ENCODE measurements at regions of chr11 and their contacts with region 1.

Region 1: DNA sequence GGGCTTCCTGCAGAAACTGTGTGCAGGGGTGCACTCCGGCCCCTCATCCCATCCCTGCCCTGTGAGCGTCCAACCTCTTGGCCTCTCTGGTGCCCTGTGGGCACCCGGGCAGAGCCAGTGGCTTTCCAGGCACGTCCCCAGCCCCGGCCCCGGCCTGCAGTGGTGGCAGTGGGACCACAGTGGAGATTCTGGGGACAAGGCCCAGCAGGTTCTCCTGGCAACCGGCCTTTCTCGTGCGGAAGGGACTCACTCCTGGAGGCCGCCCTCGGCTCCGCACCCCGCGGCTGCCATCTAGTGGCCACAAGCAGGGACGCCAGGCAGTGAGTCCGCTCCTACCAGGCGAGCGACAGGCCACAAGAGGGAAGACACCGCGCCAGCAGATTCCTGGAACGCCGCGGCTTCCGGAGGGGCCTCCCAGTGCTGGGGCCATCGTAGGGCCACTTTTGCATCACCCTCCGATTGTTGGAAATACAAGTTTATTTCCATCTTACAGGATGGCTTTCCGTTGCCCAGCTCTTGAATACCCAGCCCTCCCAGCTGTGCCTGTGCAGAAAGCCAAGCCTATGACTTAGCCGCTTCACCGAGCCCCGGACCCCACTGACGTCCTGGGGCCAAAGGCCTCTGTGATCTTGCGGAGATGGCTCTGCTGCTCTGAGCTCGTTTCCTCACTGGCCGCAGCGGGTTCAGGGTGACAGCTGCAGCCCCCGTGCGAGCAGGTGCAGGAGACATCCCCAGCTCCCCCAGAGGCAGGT is 357.3 kb downstream of the CTTN start:
- DNase-seq: peak; percentile 95
- H3K4me3 ChIP-seq: peak overlapping the region in 1 of 2 experiments; percentile 43; a peak in 1 of 4 replicates
- H3K27ac ChIP-seq: no peak overlapping the region
- H3K4me1 ChIP-seq: peaks cover 0 to 8% of the 10 kb centered on the region in 2 experiments; a peak in 1 of 4 replicates
- H3K27me3 ChIP-seq: no peaks in the 10 kb centered on the region
- CTCF ChIP-seq: peak; percentile 36
- EP300 ChIP-seq: no peak
- RAD21 ChIP-seq: peak; percentile 92

Region 2: GRCh38 chr11:70467201-70468085 is 288.1 kb before region 1 on chr11:
- CTCF ChIA-PET with region 1: interaction called, 80 read pairs
- POLR2A ChIA-PET with region 1: no interaction called
- DNase-seq: peak; percentile 85
- H3K4me3 ChIP-seq: peak overlapping the region in 1 of 2 experiments; percentile 38; a peak in 1 of 4 replicates
- H3K27ac ChIP-seq: no peak overlapping the region
- H3K4me1 ChIP-seq: no peaks in the 10 kb centered on the region; a peak in 1 of 4 replicates
- H3K27me3 ChIP-seq: no peaks in the 10 kb centered on the region
- CTCF ChIP-seq: peak; percentile 68
- EP300 ChIP-seq: no peak
- RAD21 ChIP-seq: peak; percentile 99

Region 3: DNA sequence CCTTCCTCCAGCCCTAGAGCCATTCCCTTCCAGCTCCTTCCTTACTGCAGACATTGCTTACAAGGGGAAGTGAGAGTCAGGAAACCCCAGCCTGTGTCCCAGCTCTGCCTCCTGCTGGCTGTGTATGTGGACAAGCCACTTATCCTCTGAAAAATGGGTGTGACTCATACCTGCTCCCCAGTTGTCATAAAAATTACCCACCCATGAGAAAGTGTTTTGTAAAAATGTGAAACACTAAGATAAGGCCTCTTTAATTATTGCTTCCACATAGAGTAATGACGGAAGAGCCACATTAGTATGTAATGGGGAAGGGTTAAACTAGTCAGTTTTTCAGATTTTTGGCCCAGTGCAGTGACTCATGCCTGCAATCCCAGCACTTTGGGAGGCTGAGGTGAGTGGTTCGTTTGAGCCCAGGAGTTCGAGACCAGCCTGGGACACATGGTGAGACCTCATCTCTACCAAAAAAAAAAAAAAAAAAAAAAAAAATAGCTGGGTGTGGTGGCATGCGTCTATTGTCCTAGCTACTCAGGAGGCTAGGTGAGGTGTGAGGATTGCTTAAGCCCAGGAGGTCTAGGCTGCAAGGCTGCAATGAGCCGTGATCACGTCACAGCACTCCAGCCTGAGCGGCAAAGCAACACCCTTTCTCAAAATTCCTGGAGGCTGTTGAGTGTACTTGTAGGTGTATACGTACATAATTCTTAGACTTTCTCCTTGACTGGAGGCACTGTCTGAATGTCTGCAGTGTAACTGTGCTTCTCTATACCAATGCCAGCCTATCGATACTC is 272.3 kb before region 1 on chr11:
- CTCF ChIA-PET with region 1: interaction called, 13 read pairs
- POLR2A ChIA-PET with region 1: no interaction called
- DNase-seq: no peak
- H3K4me3 ChIP-seq: no peak overlapping the region
- H3K27ac ChIP-seq: no peak overlapping the region
- H3K4me1 ChIP-seq: peaks cover 0 to 11% of the 10 kb centered on the region in 2 experiments; a peak in 1 of 4 replicates
- H3K27me3 ChIP-seq: no peaks in the 10 kb centered on the region
- CTCF ChIP-seq: no peak
- EP300 ChIP-seq: no peak
- RAD21 ChIP-seq: no peak

Region 4: DNA sequence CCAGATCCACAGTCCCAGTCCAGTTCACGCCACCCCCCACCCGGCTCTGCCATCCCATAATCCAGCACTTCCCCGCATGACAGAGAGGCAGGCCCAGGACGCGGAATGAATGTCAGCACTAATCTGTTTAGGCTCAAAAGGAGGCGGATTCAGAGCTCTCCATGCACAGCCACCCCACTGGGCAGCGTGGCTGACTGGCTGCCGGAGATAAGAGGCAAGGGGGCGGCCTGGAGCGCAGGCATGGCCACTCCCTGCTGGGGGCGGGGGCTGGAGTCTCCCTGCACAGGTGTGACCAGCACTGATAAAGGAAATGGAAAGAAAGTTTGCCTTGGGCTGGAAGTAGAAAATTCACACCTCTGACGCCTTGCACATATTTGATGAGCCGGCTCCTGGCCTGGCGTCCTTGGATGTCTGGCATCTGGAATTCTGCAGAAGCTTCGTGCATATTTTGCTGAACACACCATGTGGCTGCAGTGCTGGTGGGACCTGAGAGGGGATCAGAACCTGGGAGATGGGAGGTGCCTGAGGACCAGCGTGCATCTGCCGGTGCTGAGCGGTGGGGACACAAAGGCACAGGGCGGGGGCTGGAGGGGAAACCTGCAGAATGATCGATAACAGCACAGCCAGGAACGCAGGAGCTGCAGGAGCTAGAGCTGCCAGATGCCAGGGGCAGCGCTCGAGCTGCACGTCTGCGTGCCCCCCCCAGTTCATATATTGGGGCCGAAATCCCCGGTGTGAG is 12.9 kb before region 1 on chr11:
- CTCF ChIA-PET with region 1: interaction called, 17 read pairs
- POLR2A ChIA-PET with region 1: no interaction called
- DNase-seq: peak; percentile 82
- H3K4me3 ChIP-seq: no peak overlapping the region
- H3K27ac ChIP-seq: no peak overlapping the region
- H3K4me1 ChIP-seq: peaks cover 0 to 10% of the 10 kb centered on the region in 2 experiments; a peak in 1 of 4 replicates
- H3K27me3 ChIP-seq: no peaks in the 10 kb centered on the region
- CTCF ChIP-seq: no peak
- EP300 ChIP-seq: no peak
- RAD21 ChIP-seq: no peak

Measured in SK-N-SH (cell line).